Mammary epithelial cell (primary cell): ENCODE measurements at regions of chr22 and their contacts with region 1.

Region 1: DNA sequence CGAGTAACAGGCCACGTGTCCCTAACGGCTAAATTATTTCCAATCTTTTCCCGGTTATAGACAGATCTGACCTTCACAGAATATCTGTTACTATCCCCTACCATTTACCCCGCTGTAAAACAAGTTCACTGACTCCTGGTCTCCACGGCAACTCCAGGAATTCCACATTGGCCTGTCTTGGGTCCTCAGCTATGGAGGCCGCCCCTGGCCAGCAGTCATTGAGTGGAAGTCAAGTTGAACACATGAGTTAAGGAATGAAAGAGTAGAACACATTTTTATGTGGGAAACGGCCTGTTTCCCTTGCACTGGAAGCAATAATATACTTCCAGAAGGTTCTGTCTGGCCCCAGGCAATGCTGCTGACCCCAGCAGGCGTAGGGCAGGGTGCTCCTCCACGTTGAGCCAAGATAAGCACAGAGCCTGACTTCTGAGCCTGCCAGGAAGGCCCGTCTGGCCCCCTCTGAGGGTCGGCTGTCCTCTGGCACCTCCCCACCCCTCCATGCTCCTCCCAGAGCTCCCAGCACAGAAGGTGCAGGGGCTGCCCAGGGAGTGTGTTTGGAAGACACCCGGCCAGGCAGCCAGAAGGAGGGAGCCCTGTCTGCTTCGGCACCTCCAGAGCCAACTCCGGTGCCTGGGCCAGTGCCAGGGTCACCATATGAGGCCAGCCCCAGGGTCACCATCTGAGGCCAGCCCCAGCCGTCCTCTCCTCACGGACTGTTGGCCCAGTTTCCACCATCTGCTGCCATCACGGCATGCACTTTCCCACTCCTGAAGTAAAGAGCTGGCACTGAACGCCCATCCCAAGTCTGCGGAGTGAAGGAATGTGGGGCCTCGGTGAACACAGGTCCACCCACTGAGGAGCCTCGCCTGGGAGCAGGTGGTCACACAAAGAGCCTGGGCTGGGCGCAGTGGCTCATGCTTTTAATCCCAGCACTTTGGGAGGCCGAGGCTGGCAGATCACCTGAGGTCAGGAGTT is 813.2 kb downstream of the BRD1 start:
- DNase-seq: no peak
- H3K4me3 ChIP-seq: no peak overlapping the region
- H3K27ac ChIP-seq: no peak overlapping the region
- H3K4me1 ChIP-seq: no peaks in the 10 kb centered on the region
- H3K27me3 ChIP-seq: no peaks in the 10 kb centered on the region
- CTCF ChIP-seq: no peak

Region 2: DNA sequence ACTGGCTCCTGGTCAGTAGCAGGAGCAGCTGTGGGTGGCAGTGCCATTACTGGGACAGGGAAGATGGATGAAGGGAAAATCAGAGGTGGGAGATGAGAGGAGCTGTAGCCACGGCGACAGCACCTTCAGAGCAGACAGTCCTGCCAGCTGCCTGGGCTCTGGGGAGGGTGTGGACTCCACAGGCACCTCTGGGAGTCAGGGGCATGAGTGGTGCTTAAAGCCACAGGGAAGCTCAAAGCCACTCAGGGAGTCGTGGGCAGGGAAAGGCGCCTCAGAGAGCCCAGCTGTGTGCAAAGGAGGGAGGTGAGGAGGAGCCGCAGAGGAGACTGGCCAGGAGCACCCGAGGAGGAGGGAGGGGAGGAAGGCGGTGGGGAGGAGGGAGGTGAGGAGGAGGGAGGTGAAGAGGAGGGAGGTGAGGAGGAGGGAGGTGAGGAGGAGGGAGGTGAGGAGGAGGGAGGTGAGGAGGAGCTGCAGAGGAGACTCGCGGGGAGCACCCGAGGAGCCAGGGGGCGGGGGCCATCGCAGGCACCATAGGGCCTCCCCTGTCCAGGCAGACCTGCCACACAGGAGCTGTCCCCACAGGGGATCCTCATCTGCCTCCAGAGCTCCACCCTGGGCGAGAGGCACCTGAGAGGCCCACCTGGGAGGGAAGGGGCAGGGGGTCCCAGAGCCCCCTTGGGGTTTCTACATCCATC is 164.4 kb before region 1 on chr22:
- CTCF ChIA-PET with region 1: no interaction called
- dilution Hi-C with region 1: loop called (anchors 5 kb)
- in situ Hi-C with region 1: no loop called
- intact Hi-C with region 1: no loop called
- DNase-seq: no peak
- H3K4me3 ChIP-seq: no peak overlapping the region
- H3K27ac ChIP-seq: no peak overlapping the region
- H3K4me1 ChIP-seq: no peaks in the 10 kb centered on the region
- H3K27me3 ChIP-seq: peaks cover 1% of the 10 kb centered on the region
- CTCF ChIP-seq: no peak

Region 3: GRCh38 chr22:49068861-49069260 is 54.3 kb after region 1 on chr22:
- CTCF ChIA-PET with region 1: no interaction called
- dilution Hi-C with region 1: loop called (anchors 5 kb)
- in situ Hi-C with region 1: no loop called
- intact Hi-C with region 1: no loop called
- DNase-seq: no peak
- H3K4me3 ChIP-seq: no peak overlapping the region
- H3K27ac ChIP-seq: no peak overlapping the region
- H3K4me1 ChIP-seq: no peaks in the 10 kb centered on the region
- H3K27me3 ChIP-seq: no peaks in the 10 kb centered on the region
- CTCF ChIP-seq: no peak